HCT116 (cell line): ENCODE measurements at regions of chr11 and their contacts with region 1.

Region 1: DNA sequence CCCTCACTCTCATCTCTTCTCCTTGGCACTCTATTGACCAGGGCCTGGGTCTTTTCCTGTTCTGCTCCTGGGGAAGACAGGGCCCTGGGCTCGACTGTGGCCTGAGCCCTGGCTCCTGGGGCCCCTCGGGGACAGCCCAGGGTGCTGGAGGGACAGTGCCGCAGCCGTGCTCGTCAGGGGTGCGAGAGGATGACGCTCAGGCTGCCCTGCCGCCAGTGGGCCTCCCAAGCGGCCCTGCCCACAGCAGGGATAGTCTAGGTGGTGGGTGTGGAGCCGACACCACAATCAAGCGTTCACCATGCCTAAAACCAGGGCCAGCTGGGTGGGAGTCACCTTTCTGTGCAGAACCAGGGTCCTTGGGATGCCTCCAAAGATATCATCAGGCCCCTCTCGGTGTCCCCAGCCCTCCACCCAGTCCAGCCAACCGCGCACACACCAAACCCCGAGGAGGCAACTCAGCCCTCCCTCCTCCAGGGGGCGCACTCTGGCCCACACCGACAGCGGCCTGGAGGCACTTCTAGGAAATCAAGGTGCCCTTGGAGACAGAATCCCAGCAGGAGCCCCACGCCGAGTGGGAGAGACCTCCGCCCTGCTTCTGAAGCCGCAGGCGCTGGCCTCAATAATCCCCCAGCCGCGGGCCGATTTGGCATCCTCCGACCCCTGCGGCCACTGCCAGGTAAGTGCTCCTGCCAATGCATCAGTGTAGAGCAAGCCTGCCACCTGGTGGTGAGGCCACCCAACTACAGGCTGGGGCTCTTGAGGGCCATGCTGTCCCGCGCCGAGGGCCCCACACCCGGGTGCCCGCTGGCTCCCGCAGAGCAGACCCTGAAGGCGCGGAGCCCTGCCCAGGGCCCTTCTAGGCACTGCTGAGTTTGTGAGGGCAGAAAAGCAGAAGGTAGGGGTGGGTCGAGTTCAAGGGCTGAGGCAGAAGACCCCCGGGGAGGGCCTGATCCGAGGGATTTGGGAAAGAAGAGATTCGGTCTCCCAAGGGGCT is 496.4 kb downstream of the BUD13 start:
- DNase-seq: peak; percentile 72
- ATAC-seq: peak; percentile 94
- H3K4me3 ChIP-seq: no peak overlapping the region
- H3K27ac ChIP-seq: no peak overlapping the region
- H3K4me1 ChIP-seq: no peaks in the 10 kb centered on the region
- H3K27me3 ChIP-seq: peaks cover 20% of the 10 kb centered on the region
- CTCF ChIP-seq: peak; percentile 84 to 97 (median 95)
- POLR2A ChIP-seq: no peak
- RAD21 ChIP-seq: peak; percentile 81

Region 2: DNA sequence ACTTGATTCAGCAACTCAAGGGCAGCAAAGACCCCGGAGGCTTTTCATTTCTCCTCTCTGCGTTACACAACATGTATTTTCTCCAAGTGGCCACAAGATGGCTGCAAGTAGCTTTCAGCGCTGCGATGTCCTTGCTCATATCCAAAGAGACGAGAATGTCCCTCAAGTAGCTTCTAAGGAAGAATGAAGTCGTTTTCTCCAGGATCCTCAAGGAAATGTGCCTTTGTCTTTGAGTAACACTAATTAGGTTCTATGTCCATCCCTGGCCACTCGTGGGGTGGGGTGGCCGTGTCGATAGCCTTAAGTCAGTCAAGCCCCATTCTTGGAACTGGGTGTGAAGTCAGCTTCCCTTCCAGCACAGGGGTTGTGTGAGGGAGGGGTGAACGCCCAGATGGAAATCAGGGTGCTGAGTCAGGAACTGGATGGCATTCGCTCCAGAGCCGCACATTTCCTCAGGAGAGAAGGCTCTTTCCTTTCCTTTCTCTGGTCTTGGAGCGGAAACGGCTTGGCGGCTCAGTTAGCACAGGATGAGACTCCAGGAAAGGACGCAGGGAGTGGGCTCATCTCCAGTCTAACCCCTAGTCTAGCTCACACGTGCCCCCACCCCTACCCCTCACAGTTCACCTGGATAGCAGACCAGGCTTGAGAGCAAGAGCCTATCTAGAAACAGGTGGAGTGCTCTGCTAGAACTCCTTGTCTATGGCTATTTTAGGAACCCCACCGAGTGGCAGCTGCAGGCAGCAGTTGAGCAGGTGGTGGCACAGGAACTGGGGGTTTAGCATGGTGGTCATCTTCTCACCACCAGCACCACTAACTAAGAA is 1935.8 kb before region 1 on chr11:
- CTCF ChIA-PET with region 1: no interaction called
- POLR2A ChIA-PET with region 1: no interaction called
- RAD21 ChIA-PET with region 1: no interaction called
- intact Hi-C with region 1: loop called (anchors 10 kb)
- DNase-seq: peak; percentile 51
- ATAC-seq: peak; percentile 92
- H3K4me3 ChIP-seq: peak overlapping the region in 1 of 2 experiments; percentile 6; a peak in 1 of 4 replicates
- H3K27ac ChIP-seq: no peak overlapping the region
- H3K4me1 ChIP-seq: peaks cover 0 to 4% of the 10 kb centered on the region in 2 experiments; a peak in 1 of 4 replicates
- H3K27me3 ChIP-seq: no peaks in the 10 kb centered on the region
- CTCF ChIP-seq: peak; percentile 59 to 78 (median 74); a peak in 5 of 6 replicates
- POLR2A ChIP-seq: no peak
- RAD21 ChIP-seq: peak; percentile 83

Region 3: GRCh38 chr11:115324581-115325432 is 951.5 kb before region 1 on chr11:
- CTCF ChIA-PET with region 1: no interaction called
- POLR2A ChIA-PET with region 1: no interaction called
- RAD21 ChIA-PET with region 1: no interaction called
- intact Hi-C with region 1: loop called (anchors 1 kb)
- DNase-seq: no peak
- ATAC-seq: no peak
- H3K4me3 ChIP-seq: no peak overlapping the region
- H3K27ac ChIP-seq: no peak overlapping the region
- H3K4me1 ChIP-seq: no peaks in the 10 kb centered on the region
- H3K27me3 ChIP-seq: no peaks in the 10 kb centered on the region
- CTCF ChIP-seq: peak in 2 of 3 experiments; percentile 49 to 60; a peak in 4 of 6 replicates
- POLR2A ChIP-seq: no peak
- RAD21 ChIP-seq: peak; percentile 40

Region 4: GRCh38 chr11:115334932-115335788 is 941.2 kb before region 1 on chr11:
- CTCF ChIA-PET with region 1: no interaction called
- POLR2A ChIA-PET with region 1: no interaction called
- RAD21 ChIA-PET with region 1: no interaction called
- intact Hi-C with region 1: loop called (anchors 1 kb)
- DNase-seq: no peak
- ATAC-seq: no peak
- H3K4me3 ChIP-seq: no peak overlapping the region
- H3K27ac ChIP-seq: no peak overlapping the region
- H3K4me1 ChIP-seq: no peaks in the 10 kb centered on the region
- H3K27me3 ChIP-seq: no peaks in the 10 kb centered on the region
- CTCF ChIP-seq: peak; percentile 29 to 61 (median 50); a peak in 4 of 6 replicates
- POLR2A ChIP-seq: no peak
- RAD21 ChIP-seq: peak; percentile 42

Region 5: DNA sequence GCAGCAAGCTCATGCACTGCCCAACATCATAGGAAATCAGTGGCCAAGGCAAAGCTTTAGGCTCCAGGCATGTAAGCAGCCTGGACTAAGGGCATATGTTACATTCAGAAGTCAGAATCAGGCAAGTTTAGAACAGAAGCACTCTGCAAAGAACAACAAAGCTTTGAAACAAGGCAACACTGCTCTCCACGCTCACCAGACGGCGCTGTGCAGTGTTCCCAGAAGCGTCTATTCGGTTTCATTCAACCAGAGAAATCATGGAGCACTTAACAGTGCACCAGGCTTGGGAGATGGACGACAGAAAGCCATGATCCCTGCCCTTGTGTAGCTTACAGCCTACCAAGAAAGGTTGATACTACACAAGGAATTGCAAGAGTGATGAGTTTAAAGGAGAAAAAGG is 59.3 kb before region 1 on chr11:
- CTCF ChIA-PET with region 1: no interaction called
- POLR2A ChIA-PET with region 1: no interaction called
- RAD21 ChIA-PET with region 1: no interaction called
- intact Hi-C with region 1: loop called (anchors 1 kb)
- DNase-seq: peak; percentile 27
- ATAC-seq: peak; percentile 89
- H3K4me3 ChIP-seq: no peak overlapping the region
- H3K27ac ChIP-seq: no peak overlapping the region
- H3K4me1 ChIP-seq: no peaks in the 10 kb centered on the region
- H3K27me3 ChIP-seq: peaks cover 14% of the 10 kb centered on the region; the same call in 1 of the 2 replicates
- CTCF ChIP-seq: peak; percentile 61 to 91 (median 87)
- POLR2A ChIP-seq: no peak
- RAD21 ChIP-seq: peak; percentile 52

Region 6: DNA sequence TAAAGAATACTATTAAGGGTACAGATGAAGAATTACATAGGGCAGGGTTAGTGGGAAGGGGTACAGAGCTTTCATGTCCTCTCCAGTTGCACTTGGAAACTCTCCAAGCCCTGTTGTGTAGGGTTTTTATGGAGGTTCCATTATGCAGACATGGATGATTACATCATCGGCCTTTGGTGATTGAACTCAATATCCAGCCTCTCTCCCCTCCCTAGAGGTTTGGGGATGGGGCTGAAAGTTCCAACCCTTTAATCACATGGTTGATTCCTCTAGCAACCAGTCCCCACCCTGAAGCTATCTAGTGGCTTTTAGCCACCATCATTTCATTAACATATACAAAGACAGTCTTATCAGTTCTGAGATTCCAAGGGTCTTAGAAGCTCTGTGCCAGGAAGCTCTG is 23.9 kb after region 1 on chr11:
- CTCF ChIA-PET with region 1: no interaction called
- POLR2A ChIA-PET with region 1: no interaction called
- RAD21 ChIA-PET with region 1: no interaction called
- intact Hi-C with region 1: no loop called
- DNase-seq: no peak
- ATAC-seq: no peak
- H3K4me3 ChIP-seq: no peak overlapping the region
- H3K27ac ChIP-seq: no peak overlapping the region
- H3K4me1 ChIP-seq: no peaks in the 10 kb centered on the region
- H3K27me3 ChIP-seq: no peaks in the 10 kb centered on the region
- CTCF ChIP-seq: no peak
- POLR2A ChIP-seq: no peak
- RAD21 ChIP-seq: no peak

Region 7: DNA sequence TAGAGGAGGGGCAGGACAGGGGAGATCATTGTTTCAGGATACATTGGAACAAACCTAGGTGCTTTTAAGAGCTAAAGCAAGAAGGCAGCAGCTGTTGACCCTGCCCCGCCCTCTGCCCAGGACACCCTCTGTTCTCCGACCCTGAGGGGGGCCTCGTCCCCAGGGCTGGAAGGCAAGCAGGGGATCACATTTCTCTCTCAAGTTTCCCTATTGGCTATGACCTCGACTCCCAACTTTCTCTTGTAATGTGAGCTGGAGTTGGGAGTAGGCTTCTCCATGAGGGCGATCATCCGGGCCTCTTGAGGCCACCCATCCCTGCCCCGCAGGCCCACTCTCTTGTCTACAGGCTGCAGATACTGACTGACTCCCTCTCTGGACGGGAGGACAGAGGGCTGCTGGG is 1483.0 kb after region 1 on chr11:
- CTCF ChIA-PET with region 1: no interaction called
- POLR2A ChIA-PET with region 1: no interaction called
- RAD21 ChIA-PET with region 1: no interaction called
- intact Hi-C with region 1: no loop called
- DNase-seq: no peak
- ATAC-seq: no peak
- H3K4me3 ChIP-seq: no peak overlapping the region
- H3K27ac ChIP-seq: no peak overlapping the region
- H3K4me1 ChIP-seq: no peaks in the 10 kb centered on the region
- H3K27me3 ChIP-seq: peaks cover 28% of the 10 kb centered on the region; the same call in 1 of the 2 replicates
- CTCF ChIP-seq: no peak
- POLR2A ChIP-seq: no peak
- RAD21 ChIP-seq: no peak